ENCODE measurements at regions of chr7 and their contacts with region 1.

Region 1: DNA sequence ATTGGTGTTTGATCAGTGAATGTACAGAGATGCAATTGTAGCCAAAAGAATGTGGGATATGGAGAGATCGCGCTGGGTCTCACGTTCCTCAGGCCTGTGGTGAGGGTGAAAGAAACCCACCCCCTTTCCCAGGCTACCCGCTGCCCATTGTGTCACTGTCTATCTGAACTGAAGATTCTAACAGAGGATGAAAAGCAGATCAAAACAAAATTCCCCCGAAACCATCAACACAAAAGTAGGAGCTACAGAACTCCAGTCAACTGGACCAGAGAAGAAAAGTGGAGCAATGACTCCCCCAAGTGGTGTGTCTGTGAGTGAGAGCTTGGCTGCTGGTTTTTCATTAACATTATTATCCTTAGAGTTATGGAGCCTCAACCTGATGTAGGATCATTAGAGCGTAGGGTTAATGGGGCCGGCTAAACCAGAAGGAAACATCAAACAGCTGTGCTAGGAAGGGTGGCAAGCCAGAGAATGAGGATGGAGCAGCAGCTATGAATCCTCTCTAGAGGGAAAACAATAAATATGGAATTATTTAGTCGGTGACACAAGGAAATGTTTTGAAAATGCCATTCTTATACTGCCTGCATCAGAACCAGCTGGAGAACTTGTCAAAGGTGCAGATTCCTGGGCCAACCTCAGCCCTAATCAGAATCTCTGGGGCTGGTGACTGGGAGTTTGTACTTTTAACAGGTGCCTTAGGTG is 38.3 kb downstream of the AKR1B1 start:
- DNase-seq: peak; percentile 62
- H3K4me3 ChIP-seq: no peak overlapping the region
- H3K27ac ChIP-seq: no peak overlapping the region
- H3K4me1 ChIP-seq: peaks cover 10% of the 10 kb centered on the region
- H3K27me3 ChIP-seq: no peaks in the 10 kb centered on the region
- CTCF ChIP-seq: peak; percentile 57 to 62
- POLR2A ChIP-seq: no peak

Region 2: DNA sequence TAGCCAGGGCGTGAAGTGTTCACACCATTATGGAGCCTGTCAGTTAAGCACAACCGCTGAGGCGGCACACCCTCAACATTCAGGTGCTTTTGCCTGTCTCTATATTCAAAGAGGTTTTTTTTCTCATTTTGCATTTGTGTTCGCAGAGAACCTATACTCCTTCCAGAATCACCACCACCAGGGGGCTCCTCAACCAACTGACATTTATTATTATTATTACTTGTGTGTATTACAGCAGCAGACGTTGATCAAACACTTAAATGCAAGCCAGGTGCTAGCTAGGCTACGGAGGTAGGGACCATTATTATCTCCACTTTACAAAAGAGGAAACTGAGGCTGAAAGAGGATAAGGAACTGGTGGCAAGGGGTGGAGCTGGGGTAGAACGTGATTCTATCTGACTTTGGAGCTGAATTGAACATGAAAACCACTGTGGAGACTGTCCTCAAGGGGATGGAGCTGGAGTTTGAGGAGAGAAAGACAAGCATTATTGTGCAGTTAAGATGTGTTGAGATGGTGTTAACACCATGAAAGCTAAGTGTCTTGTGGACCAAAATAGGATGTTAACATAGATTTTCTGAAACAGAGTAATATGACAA is 1710.5 kb before region 1 on chr7:
- CTCF ChIA-PET with region 1: interaction called, 13 read pairs
- POLR2A ChIA-PET with region 1: no interaction called
- dilution Hi-C with region 1: no loop called
- intact Hi-C with region 1: loop called (anchors 2 kb)
- DNase-seq: peak; percentile 59
- H3K4me3 ChIP-seq: no peak overlapping the region
- H3K27ac ChIP-seq: no peak overlapping the region
- H3K4me1 ChIP-seq: no peaks in the 10 kb centered on the region
- H3K27me3 ChIP-seq: peaks cover 0 to 2% of the 10 kb centered on the region in 2 experiments
- CTCF ChIP-seq: peak; percentile 53
- POLR2A ChIP-seq: no peak

Region 3: GRCh38 chr7:133696056-133696455 is 724.5 kb before region 1 on chr7:
- CTCF ChIA-PET with region 1: no interaction called
- POLR2A ChIA-PET with region 1: no interaction called
- dilution Hi-C with region 1: no loop called
- intact Hi-C with region 1: no loop called
- DNase-seq: no peak
- H3K4me3 ChIP-seq: no peak overlapping the region
- H3K27ac ChIP-seq: no peak overlapping the region
- H3K4me1 ChIP-seq: no peaks in the 10 kb centered on the region
- H3K27me3 ChIP-seq: no peaks in the 10 kb centered on the region
- CTCF ChIP-seq: no peak
- POLR2A ChIP-seq: no peak

Region 4: GRCh38 chr7:134316539-134317344 is 103.8 kb before region 1 on chr7 and contains the start of gene SLC35B4:
- CTCF ChIA-PET with region 1: interaction called, 6 read pairs
- POLR2A ChIA-PET with region 1: no interaction called
- dilution Hi-C with region 1: no loop called
- intact Hi-C with region 1: loop called (anchors 5 kb)
- DNase-seq: peak; percentile 99
- H3K4me3 ChIP-seq: peak within 1 kb of the TSS; percentile 53 to 76 (median 72)
- H3K27ac ChIP-seq: peak within 1 kb of the TSS; percentile 30
- H3K4me1 ChIP-seq: peaks cover 11% of the 10 kb centered on the region
- H3K27me3 ChIP-seq: peaks cover 3% of the 10 kb centered on the region in 2 experiments
- CTCF ChIP-seq: peak in 1 of 2 donors; percentile 42
- POLR2A ChIP-seq: peak; percentile 57
- total RNA-seq, gene SLC35B4: 20.2 and 22.1 TPM in 2 replicates

Region 5: DNA sequence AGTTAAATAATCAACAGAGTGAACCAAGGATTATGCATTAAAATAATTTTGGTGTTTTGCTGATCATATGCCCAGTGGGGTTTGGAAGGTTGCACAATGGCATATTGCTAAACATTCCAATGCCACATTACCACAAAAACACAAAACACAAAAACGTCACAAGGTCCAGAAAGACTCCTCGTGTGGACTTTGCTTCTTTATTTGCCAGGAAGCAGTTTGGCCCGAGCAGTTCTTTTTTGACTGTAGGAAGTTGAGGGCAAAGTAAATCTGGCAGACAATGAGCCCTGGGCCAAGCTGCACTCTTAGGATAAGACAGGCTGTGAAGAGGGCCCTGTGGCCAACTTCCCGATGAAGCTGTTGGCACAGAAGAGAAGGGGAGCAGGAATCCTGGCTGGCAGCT is 64.6 kb before region 1 on chr7:
- CTCF ChIA-PET with region 1: interaction called, 10 read pairs
- POLR2A ChIA-PET with region 1: no interaction called
- dilution Hi-C with region 1: no loop called
- intact Hi-C with region 1: no loop called
- DNase-seq: peak; percentile 21
- H3K4me3 ChIP-seq: no peak overlapping the region
- H3K27ac ChIP-seq: no peak overlapping the region
- H3K4me1 ChIP-seq: no peaks in the 10 kb centered on the region
- H3K27me3 ChIP-seq: peaks cover 4 to 8% of the 10 kb centered on the region in 2 experiments
- CTCF ChIP-seq: no peak
- POLR2A ChIP-seq: no peak

Region 6: GRCh38 chr7:134480736-134481135 is 60.2 kb after region 1 on chr7:
- CTCF ChIA-PET with region 1: interaction called, 10 read pairs
- POLR2A ChIA-PET with region 1: no interaction called
- dilution Hi-C with region 1: no loop called
- intact Hi-C with region 1: no loop called
- DNase-seq: peak; percentile 71
- H3K4me3 ChIP-seq: no peak overlapping the region
- H3K27ac ChIP-seq: peak overlapping the region; percentile 9
- H3K4me1 ChIP-seq: peaks cover 16% of the 10 kb centered on the region
- H3K27me3 ChIP-seq: no peaks in the 10 kb centered on the region
- CTCF ChIP-seq: no peak
- POLR2A ChIP-seq: no peak

Region 7: GRCh38 chr7:134565643-134566136 is 145.1 kb after region 1 on chr7:
- CTCF ChIA-PET with region 1: no interaction called
- POLR2A ChIA-PET with region 1: no interaction called
- dilution Hi-C with region 1: no loop called
- intact Hi-C with region 1: no loop called
- DNase-seq: no peak
- H3K4me3 ChIP-seq: no peak overlapping the region
- H3K27ac ChIP-seq: no peak overlapping the region
- H3K4me1 ChIP-seq: no peaks in the 10 kb centered on the region
- H3K27me3 ChIP-seq: peaks cover 2 to 3% of the 10 kb centered on the region in 2 experiments
- CTCF ChIP-seq: no peak
- POLR2A ChIP-seq: no peak

Region 8: DNA sequence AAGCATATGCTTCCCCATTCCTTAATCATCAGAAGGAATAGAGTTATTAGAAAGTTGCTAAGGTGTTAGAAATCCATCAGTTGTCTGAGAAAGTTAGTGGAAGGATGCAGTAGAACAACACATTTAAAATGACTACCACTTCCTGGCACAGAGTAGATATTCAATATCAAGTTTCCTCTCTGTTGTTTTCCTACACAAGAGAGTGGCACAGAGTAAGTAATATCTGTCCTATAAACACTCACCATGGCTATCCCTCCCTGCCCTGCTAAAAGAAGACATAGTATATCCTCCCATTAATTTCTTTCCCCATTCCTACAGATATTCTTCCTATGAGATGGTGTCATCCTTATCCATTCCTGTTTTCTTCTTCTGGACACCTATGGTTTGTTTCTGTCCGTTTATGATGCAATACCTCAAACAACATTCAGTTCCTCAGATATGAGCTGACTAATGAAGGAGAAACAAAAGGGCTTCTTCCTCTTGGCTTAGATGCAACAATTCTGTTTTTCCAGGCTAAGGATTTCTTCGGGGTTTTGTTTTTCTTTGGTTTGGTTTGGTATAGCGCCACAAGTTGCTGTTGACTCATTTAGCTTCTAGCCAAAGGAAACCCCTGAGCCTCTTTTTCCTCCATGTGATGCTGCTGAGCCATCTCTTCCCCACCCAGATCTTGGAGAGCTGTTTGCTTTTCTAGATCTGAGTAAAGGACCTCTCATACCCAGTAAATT is 193.2 kb after region 1 on chr7:
- CTCF ChIA-PET with region 1: no interaction called
- POLR2A ChIA-PET with region 1: no interaction called
- dilution Hi-C with region 1: no loop called
- intact Hi-C with region 1: no loop called
- DNase-seq: peak; percentile 99
- H3K4me3 ChIP-seq: peak overlapping the region in 1 of 3 experiments; percentile 3
- H3K27ac ChIP-seq: peak overlapping the region; percentile 85
- H3K4me1 ChIP-seq: peaks cover 28% of the 10 kb centered on the region
- H3K27me3 ChIP-seq: no peaks in the 10 kb centered on the region
- CTCF ChIP-seq: no peak
- POLR2A ChIP-seq: peak; percentile 64

Measured in endothelial cell of umbilical vein (primary cell).